ENCODE measurements at regions of chr15 and their contacts with region 1.

Region 1: GRCh38 chr15:83248151-83249029 is 36.1 kb downstream of the BNC1 start:
- DNase-seq: peak in 1 of 2 donors; percentile 5
- ATAC-seq: no peak

Region 2: GRCh38 chr15:83422081-83422480 is 173.7 kb after region 1 on chr15:
- intact Hi-C with region 1: no loop called
- DNase-seq: no peak
- ATAC-seq: no peak

Region 3: GRCh38 chr15:83436458-83437158 is 188.2 kb after region 1 on chr15:
- intact Hi-C with region 1: loop called in 1 of 2 experiments (anchors 10 kb)
- DNase-seq: no peak
- ATAC-seq: no peak

Measured in left colon (tissue), 2 donors.